ENCODE measurements at regions of chr14 and their contacts with region 1.

Region 1: GRCh38 chr14:65927931-65928356 is 515.4 kb downstream of the FUT8 start:
- DNase-seq: peak; percentile 92
- H3K4me3 Mint-ChIP-seq: peak overlapping the region; percentile 18
- H3K27ac Mint-ChIP-seq: peak overlapping the region; percentile 43
- H3K4me1 Mint-ChIP-seq: peaks cover 51% of the 10 kb centered on the region
- H3K27me3 Mint-ChIP-seq: peaks cover 2% of the 10 kb centered on the region

Region 2: GRCh38 chr14:65804752-65805473 is 123.0 kb before region 1 on chr14:
- CTCF ChIA-PET with region 1: no interaction called
- POLR2A ChIA-PET with region 1: no interaction called
- intact Hi-C with region 1: loop called (anchors 5 kb)
- DNase-seq: peak; percentile 26
- H3K4me3 Mint-ChIP-seq: no peak overlapping the region
- H3K27ac Mint-ChIP-seq: no peak overlapping the region
- H3K4me1 Mint-ChIP-seq: peaks cover 8% of the 10 kb centered on the region
- H3K27me3 Mint-ChIP-seq: no peaks in the 10 kb centered on the region

Region 3: DNA sequence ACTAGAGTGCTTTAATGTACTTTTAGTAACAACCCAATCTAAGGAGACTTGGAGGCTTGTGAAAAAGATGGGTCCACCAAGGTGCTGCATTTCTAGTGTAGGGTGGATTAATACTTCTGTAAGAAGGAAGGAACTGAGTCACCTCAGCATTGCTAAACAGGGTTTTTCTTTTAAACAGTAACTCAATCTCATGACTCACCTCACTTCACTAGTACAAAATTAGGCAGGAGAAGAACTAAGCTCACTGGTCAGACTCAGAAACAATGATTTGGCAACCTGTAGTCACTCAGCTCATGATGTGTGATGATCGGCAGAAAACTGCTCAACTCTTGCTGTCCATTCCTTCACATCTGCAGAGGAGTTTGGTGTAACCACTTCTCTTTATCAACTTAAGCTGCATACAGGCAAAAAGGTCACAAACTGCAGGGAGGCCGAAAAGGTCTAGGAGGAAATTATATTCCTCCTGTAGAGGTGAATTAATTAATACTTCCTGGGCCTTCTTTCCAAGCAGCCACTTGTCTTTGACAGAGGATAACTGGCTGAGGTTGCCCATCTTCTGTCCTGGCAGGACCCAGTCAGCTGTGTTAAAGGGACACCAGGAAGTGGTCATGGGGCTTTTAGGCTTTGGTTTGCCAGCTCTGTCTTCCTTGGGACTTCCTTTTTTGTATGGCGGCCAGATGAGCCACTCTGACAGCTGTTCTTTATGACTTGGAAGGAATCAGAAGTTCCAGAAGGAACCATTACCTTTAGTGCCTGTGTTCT is 48.5 kb before region 1 on chr14:
- CTCF ChIA-PET with region 1: interaction called, 3 read pairs
- POLR2A ChIA-PET with region 1: no interaction called
- intact Hi-C with region 1: loop called (anchors 1 kb)
- DNase-seq: peak; percentile 15
- H3K4me3 Mint-ChIP-seq: no peak overlapping the region
- H3K27ac Mint-ChIP-seq: peak overlapping the region; percentile 71
- H3K4me1 Mint-ChIP-seq: peaks cover 44% of the 10 kb centered on the region
- H3K27me3 Mint-ChIP-seq: no peaks in the 10 kb centered on the region

Region 4: GRCh38 chr14:65940056-65940733 is 12.3 kb after region 1 on chr14:
- CTCF ChIA-PET with region 1: interaction called, 4 read pairs
- POLR2A ChIA-PET with region 1: interaction called, 8 read pairs
- intact Hi-C with region 1: loop called (anchors 1 kb)
- DNase-seq: peak; percentile 48
- H3K4me3 Mint-ChIP-seq: no peak overlapping the region
- H3K27ac Mint-ChIP-seq: no peak overlapping the region
- H3K4me1 Mint-ChIP-seq: peaks cover 35% of the 10 kb centered on the region
- H3K27me3 Mint-ChIP-seq: no peaks in the 10 kb centered on the region

Region 5: GRCh38 chr14:65949711-65950516 is 22.0 kb after region 1 on chr14:
- CTCF ChIA-PET with region 1: interaction called, 4 read pairs
- POLR2A ChIA-PET with region 1: interaction called, 7 read pairs
- intact Hi-C with region 1: loop called (anchors 1 kb)
- DNase-seq: peak; percentile 73
- H3K4me3 Mint-ChIP-seq: no peak overlapping the region
- H3K27ac Mint-ChIP-seq: peak overlapping the region; percentile 84
- H3K4me1 Mint-ChIP-seq: peaks cover 35% of the 10 kb centered on the region
- H3K27me3 Mint-ChIP-seq: peaks cover 9% of the 10 kb centered on the region